ENCODE measurements at regions of chr2 and their contacts with region 1.

Region 1: DNA sequence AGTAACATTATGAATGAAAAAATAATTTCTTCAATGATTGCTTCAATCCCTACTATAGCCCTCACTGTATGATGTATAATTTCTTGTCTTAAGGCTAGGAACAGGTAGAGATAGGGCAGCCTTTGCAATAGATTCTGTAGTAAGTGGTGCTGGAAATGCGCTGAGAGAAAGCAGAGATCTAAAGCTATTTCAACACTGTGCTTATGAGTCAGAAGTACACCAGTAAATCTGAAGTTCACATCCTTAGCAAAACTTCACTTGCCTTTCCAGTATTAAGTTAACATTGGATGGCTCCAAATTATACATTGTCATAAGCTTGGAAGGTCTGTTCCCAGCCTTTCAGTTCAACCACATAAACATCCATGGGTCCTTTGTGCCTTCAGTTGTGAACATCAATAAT is 178.2 kb upstream of the EPHA4 start:
- DNase-seq: no peak
- H3K4me3 ChIP-seq: no peak overlapping the region
- H3K27ac ChIP-seq: no peak overlapping the region
- H3K4me1 ChIP-seq: no peaks in the 10 kb centered on the region
- H3K27me3 ChIP-seq: no peaks in the 10 kb centered on the region
- CTCF ChIP-seq: no peak
- POLR2A ChIP-seq: no peak

Region 2: GRCh38 chr2:220601674-220602073 is 1148.6 kb before region 1 on chr2:
- intact Hi-C with region 1: no loop called
- DNase-seq: no peak
- H3K4me3 ChIP-seq: no peak overlapping the region
- H3K27ac ChIP-seq: no peak overlapping the region
- H3K4me1 ChIP-seq: no peaks in the 10 kb centered on the region
- H3K27me3 ChIP-seq: no peaks in the 10 kb centered on the region
- CTCF ChIP-seq: no peak
- POLR2A ChIP-seq: no peak

Region 3: DNA sequence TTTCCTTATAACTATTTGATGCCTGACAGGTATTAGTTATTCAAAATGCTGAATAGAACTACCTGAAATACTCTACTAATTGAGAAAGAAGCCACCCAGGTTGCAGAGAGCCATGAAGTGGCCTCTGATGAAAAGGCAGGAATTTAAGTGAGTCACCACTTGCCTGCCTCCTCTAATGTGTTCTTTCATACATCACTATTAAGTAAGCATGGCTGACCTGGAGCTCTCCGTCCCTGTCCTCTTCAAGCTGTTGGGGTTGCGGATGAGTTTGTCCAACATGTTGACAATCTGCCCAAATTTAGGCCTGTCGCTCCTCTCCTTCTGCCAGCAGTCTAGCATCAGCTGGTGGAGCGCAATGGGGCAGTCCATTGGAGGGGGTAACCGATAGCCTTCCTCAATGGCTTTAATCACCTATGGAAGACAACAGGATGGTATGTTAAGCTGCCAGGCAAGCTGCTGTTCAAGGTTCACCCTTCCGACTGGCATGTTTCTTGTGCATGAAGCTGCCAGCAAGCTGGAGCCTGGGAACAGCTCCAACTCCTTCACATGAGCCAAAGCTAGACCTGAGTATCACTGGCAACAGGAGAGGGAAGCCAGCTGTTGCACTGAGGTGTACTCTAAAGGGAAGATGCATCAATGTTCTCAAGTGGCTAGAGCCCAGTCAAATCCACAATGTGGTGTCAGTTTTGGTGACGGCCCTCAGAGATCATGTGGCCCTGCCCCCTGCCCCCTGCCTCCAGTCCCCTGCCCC is 320.4 kb before region 1 on chr2:
- intact Hi-C with region 1: loop called (anchors 5 kb)
- DNase-seq: peak in 1 of 2 donors; percentile 59
- H3K4me3 ChIP-seq: no peak overlapping the region
- H3K27ac ChIP-seq: peak overlapping the region in 1 of 2 donors; percentile 45
- H3K4me1 ChIP-seq: no peaks in the 10 kb centered on the region
- H3K27me3 ChIP-seq: no peaks in the 10 kb centered on the region
- CTCF ChIP-seq: no peak
- POLR2A ChIP-seq: no peak

Measured in breast epithelium (tissue), 4 donors.